Transverse colon (tissue), 4 donors: ENCODE measurements at regions of chr1 and their contacts with region 1.

Region 1: GRCh38 chr1:64686828-64687724 is 57.8 kb upstream of the RAVER2 start:
- DNase-seq: peak; percentile 22
- H3K4me3 ChIP-seq: no peak overlapping the region
- H3K27ac ChIP-seq: no peak overlapping the region
- H3K4me1 ChIP-seq: peaks cover 0 to 12% (median 8%) of the 10 kb centered on the region in 4 donors
- H3K27me3 ChIP-seq: no peaks in the 10 kb centered on the region
- CTCF ChIP-seq: peak; percentile 78 to 93 (median 87)
- EP300 ChIP-seq: no peak
- POLR2A ChIP-seq: no peak

Region 2: DNA sequence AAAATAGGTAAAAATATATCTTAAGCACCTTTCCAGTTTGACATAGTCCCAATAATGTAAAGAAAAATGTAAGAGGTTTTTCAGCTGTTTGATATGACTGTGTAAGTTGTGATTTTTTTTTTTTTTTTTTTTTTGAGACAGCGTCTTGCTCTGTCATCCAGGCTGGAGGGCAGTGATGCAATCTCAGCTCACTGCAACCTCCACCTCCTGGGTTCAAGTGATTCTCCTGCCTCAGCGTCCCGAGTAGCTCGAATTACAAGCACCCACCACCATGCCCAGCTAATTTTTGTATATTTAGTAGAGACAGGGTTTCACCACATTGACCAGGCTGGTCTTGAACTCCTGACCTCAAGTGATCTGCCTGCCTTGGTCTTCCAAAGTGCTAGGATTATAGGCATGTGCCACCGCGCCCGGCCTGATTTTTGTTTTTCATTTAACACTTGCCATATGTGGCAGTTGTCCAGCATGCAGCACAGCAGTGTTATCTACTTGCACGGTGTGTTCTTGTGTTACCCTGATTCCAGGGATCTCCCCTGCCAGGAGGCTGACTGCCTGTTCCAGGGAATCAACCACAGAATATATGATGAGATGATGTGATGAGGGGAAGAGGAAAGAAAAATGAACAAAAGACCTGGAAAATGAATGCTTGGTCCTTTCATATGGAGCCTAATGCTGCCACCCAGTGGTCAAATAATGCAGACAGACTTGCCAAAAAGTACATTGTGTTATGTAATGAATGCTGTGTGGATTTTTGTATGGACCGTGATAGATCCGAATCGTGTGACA is 136.8 kb after region 1 on chr1:
- in situ Hi-C with region 1: loop called in 2 of 4 experiments (anchors 10 kb)
- intact Hi-C with region 1: no loop called
- DNase-seq: peak; percentile 76
- H3K4me3 ChIP-seq: no peak overlapping the region
- H3K27ac ChIP-seq: no peak overlapping the region
- H3K4me1 ChIP-seq: peaks cover 0 to 14% (median 2%) of the 10 kb centered on the region in 4 donors
- H3K27me3 ChIP-seq: no peaks in the 10 kb centered on the region
- CTCF ChIP-seq: peak; percentile 77 to 90 (median 82)
- EP300 ChIP-seq: no peak
- POLR2A ChIP-seq: no peak